ENCODE measurements at regions of chr10 and their contacts with region 1.

Region 1: GRCh38 chr10:97759158-97759887 is 12.5 kb downstream of the SFRP5 start:
- DNase-seq: peak; percentile 20
- H3K4me3 ChIP-seq: no peak overlapping the region
- H3K27ac ChIP-seq: no peak overlapping the region
- H3K27me3 ChIP-seq: no peaks in the 10 kb centered on the region
- CTCF ChIP-seq: peak; percentile 94

Region 2: DNA sequence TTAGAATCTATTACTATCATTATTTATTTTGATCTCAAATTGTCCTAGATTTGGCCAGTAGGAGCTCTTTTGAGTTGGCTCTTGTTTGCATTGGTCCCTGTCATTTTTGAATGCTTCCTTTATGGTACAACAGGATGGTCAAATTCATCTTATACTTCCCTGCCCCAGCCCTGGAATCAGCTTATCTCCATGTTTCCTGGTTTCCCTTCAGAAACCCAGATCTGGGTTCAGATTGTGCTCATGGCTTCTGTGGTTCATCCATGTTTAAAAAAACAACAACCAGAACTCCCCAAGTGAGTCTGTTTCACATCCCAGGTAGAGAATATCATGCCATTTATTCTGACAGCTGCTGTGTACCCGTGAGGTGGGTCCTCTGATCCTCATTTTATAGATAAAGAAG is 11.8 kb before region 1 on chr10:
- CTCF ChIA-PET with region 1: interaction called, 13 read pairs
- POLR2A ChIA-PET with region 1: interaction called, 3 read pairs
- DNase-seq: no peak
- H3K4me3 ChIP-seq: no peak overlapping the region
- H3K27ac ChIP-seq: no peak overlapping the region
- H3K27me3 ChIP-seq: no peaks in the 10 kb centered on the region
- CTCF ChIP-seq: no peak

Measured in AG04450 (cell line).